Mammary epithelial cell (primary cell): ENCODE measurements at regions of chr1 and their contacts with region 1.

Region 1: GRCh38 chr1:12501661-12502060 is 116.3 kb downstream of the DHRS3 start:
- DNase-seq: peak; percentile 69
- H3K4me3 ChIP-seq: no peak overlapping the region
- H3K27ac ChIP-seq: no peak overlapping the region
- H3K4me1 ChIP-seq: peaks cover 10% of the 10 kb centered on the region
- H3K27me3 ChIP-seq: no peaks in the 10 kb centered on the region
- CTCF ChIP-seq: no peak

Region 2: GRCh38 chr1:12407050-12407961 is 94.4 kb before region 1 on chr1:
- CTCF ChIA-PET with region 1: no interaction called
- dilution Hi-C with region 1: loop called (anchors 10 kb)
- in situ Hi-C with region 1: no loop called
- intact Hi-C with region 1: no loop called
- DNase-seq: peak; percentile 52
- H3K4me3 ChIP-seq: no peak overlapping the region
- H3K27ac ChIP-seq: no peak overlapping the region
- H3K4me1 ChIP-seq: no peaks in the 10 kb centered on the region
- H3K27me3 ChIP-seq: no peaks in the 10 kb centered on the region
- CTCF ChIP-seq: peak; percentile 37 to 49